ENCODE measurements at regions of chr12 and their contacts with region 1.

Region 1: DNA sequence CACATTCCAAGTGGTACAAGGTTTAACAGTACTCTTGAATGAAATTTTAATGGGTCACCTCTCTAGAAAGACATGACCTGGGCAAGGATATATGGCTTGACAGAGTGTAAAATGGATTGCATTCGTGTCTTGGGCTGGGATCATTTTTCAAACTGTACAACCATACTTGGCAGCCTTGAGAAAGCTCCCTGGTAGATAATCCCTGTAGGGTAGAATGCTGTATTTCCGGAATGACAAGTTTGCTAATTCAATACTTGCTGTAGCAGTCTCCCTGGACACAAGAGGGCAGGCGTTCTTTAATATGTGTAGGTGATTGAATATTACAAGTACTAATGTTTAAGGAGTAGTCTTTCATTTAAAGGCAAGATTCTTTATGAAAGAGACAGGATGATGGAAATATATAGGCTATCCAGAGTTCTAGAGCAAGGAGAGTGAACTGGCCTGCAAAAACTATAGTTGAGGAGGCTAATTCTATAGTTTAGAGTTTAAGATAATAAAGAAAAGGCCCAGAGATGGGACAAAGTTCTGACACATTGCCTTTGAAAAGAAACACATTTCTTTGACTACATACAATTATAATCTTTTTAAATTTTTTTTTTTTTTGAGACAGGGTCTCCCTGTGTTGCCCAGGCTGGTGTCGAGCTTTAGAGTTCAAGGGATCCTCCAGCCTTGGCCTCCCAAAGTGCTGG is 53.4 kb downstream of the PLBD1 start:
- DNase-seq: no peak
- ATAC-seq: no peak
- H3K4me3 ChIP-seq: no peak overlapping the region
- H3K27ac ChIP-seq: no peak overlapping the region
- H3K4me1 ChIP-seq: no peaks in the 10 kb centered on the region
- H3K27me3 ChIP-seq: no peaks in the 10 kb centered on the region
- CTCF ChIP-seq: peak in 2 of 5 experiments; percentile 33 to 34
- POLR2A ChIP-seq: no peak

Region 2: GRCh38 chr12:14554281-14555007 is 40.1 kb after region 1 on chr12:
- in situ Hi-C with region 1: no loop called
- intact Hi-C with region 1: loop called (anchors 5 kb)
- DNase-seq: peak; percentile 67 to 82
- ATAC-seq: peak; percentile 98 to 99
- H3K4me3 ChIP-seq: peak overlapping the region in 3 of 4 donors; percentile 31 to 37 (median 31)
- H3K27ac ChIP-seq: peak overlapping the region; percentile 73 to 79 (median 78)
- H3K4me1 ChIP-seq: peaks cover 10 to 15% of the 10 kb centered on the region in 2 donors
- H3K27me3 ChIP-seq: no peaks in the 10 kb centered on the region
- CTCF ChIP-seq: peak in 1 of 5 experiments; percentile 11
- POLR2A ChIP-seq: no peak

Region 3: GRCh38 chr12:14664510-14664909 is 150.2 kb after region 1 on chr12:
- in situ Hi-C with region 1: no loop called
- intact Hi-C with region 1: loop called (anchors 2 kb)
- DNase-seq: no peak
- ATAC-seq: no peak
- H3K4me3 ChIP-seq: no peak overlapping the region
- H3K27ac ChIP-seq: no peak overlapping the region
- H3K4me1 ChIP-seq: no peaks in the 10 kb centered on the region
- H3K27me3 ChIP-seq: no peaks in the 10 kb centered on the region
- CTCF ChIP-seq: peak; percentile 35 to 63 (median 54)
- POLR2A ChIP-seq: no peak

Region 4: DNA sequence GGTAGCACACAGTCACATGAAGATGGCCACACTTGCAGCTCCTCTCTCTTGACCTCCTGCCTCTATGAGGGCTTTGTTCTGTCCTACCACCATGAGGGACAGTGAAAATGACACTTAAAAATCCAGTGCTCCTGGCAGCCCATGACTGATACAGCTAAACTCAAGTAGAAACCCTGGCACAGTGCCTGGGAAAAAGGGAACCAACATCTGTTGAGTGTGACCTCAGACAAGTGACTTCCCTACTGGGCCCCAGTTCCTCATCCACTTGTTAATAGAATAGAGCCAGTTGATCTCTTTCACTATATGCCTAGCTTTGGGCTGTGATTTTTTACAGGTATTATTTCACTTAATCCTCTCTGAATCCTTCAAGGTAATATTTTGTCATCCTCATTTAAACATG is 177.3 kb after region 1 on chr12:
- in situ Hi-C with region 1: no loop called
- intact Hi-C with region 1: no loop called
- DNase-seq: peak; percentile 45 to 46
- ATAC-seq: peak in 1 of 2 donors; percentile 51
- H3K4me3 ChIP-seq: no peak overlapping the region
- H3K27ac ChIP-seq: no peak overlapping the region
- H3K4me1 ChIP-seq: no peaks in the 10 kb centered on the region
- H3K27me3 ChIP-seq: no peaks in the 10 kb centered on the region
- CTCF ChIP-seq: no peak
- POLR2A ChIP-seq: no peak

Measured in gastrocnemius medialis (tissue), 4 donors.